ENCODE measurements at regions of chr15 and their contacts with region 1.

Region 1: DNA sequence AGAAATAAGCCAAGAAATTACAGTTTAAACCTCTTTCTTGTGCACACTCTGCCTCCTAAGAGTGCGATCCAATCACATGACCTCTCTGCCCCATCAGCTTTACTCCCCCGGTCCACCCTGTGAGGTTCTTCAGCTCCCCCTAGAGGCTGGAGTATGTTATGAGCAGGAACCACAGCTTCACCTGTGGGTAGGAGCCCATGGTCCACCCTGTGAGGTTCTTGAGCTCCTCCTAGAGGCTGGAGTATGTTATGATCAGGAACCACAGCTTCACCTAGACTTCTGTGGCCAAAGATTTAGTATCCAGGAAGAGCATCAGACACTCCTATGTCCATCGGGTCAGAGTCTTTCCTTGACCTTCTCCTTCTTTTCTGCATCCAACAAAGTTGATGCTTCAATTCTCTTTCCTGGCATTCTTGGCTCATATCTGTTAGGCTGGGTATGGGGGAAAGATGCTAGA is 163.9 kb downstream of the MINAR1 start:
- DNase-seq: peak; percentile 49 to 86 (median 83)
- H3K4me3 ChIP-seq: no peak overlapping the region
- H3K27ac ChIP-seq: no peak overlapping the region
- H3K4me1 ChIP-seq: no peaks in the 10 kb centered on the region
- H3K27me3 ChIP-seq: no peaks in the 10 kb centered on the region
- CTCF ChIP-seq: peak; percentile 92 to 99 (median 96)
- POLR2A ChIP-seq: no peak

Region 2: DNA sequence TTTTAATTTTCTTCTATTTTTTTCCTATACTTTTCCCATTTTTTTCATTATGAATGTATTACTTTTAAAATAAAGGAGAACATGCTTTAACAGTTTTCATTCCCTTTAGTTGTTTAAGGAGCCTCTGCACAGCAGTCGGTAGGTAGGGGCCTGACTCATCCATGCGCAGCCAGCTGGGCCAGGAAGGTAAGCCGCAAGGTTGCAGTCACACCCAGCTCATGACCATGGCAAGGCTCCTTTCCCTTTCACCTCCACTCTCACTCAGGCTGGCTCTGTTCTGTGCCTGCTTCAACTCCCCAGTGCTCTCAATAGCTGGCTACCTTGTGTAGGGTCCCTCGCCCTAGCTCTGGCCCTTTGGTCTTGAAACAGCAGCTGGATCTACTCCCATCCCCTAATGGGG is 330.9 kb before region 1 on chr15:
- intact Hi-C with region 1: no loop called
- DNase-seq: no peak
- H3K4me3 ChIP-seq: no peak overlapping the region
- H3K27ac ChIP-seq: no peak overlapping the region
- H3K4me1 ChIP-seq: no peaks in the 10 kb centered on the region
- H3K27me3 ChIP-seq: no peaks in the 10 kb centered on the region
- CTCF ChIP-seq: no peak
- POLR2A ChIP-seq: no peak

Region 3: DNA sequence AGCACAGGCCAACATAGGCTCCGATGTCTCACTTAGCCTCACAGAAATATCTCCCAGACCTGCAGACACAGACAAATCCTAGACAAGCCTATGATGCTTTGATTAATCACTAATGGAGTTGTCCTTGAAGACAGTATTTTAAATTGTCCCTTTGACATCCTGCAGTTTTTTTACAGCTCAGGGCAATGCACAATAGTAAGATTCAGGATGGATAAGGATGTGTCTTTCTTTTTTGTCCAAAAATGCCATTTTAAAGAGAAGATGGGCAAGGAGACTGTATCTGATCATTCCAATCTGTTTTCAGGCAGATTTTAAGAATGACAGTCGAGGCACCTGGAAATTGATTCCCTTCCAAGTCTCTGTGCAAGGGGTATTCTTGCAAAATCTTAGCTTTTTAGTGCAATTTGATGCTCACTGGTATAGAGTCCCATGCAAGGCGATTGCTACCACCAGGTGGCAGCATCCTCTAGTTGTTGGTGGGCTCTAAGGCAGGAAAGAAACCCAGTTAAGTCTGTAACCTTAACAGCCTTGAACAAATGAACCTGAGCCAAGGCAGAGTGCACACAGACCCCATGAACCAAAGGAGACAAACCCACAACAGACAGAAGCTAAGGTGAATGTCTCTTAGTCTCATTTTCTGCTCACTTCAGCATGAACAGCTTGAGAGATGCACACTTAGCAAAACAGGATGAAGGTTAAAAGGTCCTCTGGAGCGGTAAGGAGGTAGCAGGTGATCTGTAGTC is 215.2 kb before region 1 on chr15:
- intact Hi-C with region 1: loop called (anchors 5 to 10 kb)
- DNase-seq: peak; percentile 62 to 92 (median 81)
- H3K4me3 ChIP-seq: no peak overlapping the region
- H3K27ac ChIP-seq: no peak overlapping the region
- H3K4me1 ChIP-seq: no peaks in the 10 kb centered on the region
- H3K27me3 ChIP-seq: no peaks in the 10 kb centered on the region
- CTCF ChIP-seq: peak; percentile 81 to 93 (median 85)
- POLR2A ChIP-seq: no peak

Measured in adrenal gland (tissue), 19 donors.